Posterior vena cava (tissue), 2 donors: ENCODE measurements at regions of chr5 and their contacts with region 1.

Region 1: GRCh38 chr5:79955941-79956670 is 35.0 kb downstream of the MTX3 start:
- DNase-seq: no peak

Region 2: GRCh38 chr5:79938468-79938867 is 17.6 kb before region 1 on chr5:
- intact Hi-C with region 1: no loop called
- DNase-seq: no peak

Region 3: DNA sequence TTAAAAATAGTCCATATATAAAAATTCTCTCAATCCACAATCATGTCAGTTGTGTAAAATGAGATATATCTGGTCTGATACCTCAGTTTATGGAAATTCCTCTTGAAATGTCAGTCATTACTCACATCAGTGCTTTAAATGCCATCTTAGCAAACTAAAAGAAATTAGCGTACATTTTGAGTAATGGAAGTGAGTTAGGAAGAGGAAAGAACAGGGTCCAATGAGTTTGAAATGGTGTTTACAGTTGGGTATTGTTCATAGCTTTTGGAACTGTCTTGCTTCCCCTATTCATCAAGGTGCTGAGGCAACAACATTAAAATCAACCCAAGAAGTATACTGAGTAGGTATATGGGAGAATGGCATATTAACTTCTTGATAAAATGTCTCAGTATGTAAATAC is 43.6 kb after region 1 on chr5:
- intact Hi-C with region 1: loop called in 1 of 2 experiments (anchors 2 kb)
- DNase-seq: no peak

Region 4: GRCh38 chr5:80055491-80056170 is 99.5 kb after region 1 on chr5:
- intact Hi-C with region 1: no loop called
- DNase-seq: no peak